H1 (cell line): ENCODE measurements at regions of chr6 and their contacts with region 1.

Region 1: GRCh38 chr6:30907758-30908591 is at the start of gene GTF2H4:
- DNase-seq: peak; percentile 93 to 95
- H3K4me3 ChIP-seq: peak within 1 kb of the TSS; percentile 83 to 98 (median 98)
- H3K27ac ChIP-seq: no peak within 1 kb of the TSS
- H3K4me1 ChIP-seq: peaks cover 0 to 4% (median 2%) of the 10 kb centered on the region in 4 experiments; a peak in 4 of 7 replicates
- H3K27me3 ChIP-seq: no peaks in the 10 kb centered on the region
- CTCF ChIP-seq: no peak
- EP300 ChIP-seq: no peak
- POLR2A ChIP-seq: peak in 1 of 2 experiments; percentile 63; a peak in 2 of 3 replicates
- RAD21 ChIP-seq: no peak
- total RNA-seq, gene GTF2H4: 49.5 and 53.4 TPM in 2 replicates

Region 2: GRCh38 chr6:30810813-30811329 is 97.1 kb before region 1 on chr6:
- CTCF ChIA-PET with region 1: no interaction called
- POLR2A ChIA-PET with region 1: no interaction called
- DNase-seq: no peak
- H3K4me3 ChIP-seq: no peak overlapping the region
- H3K27ac ChIP-seq: no peak overlapping the region
- H3K4me1 ChIP-seq: peaks cover 3 to 11% (median 6%) of the 10 kb centered on the region in 4 experiments; a peak in 6 of 7 replicates
- H3K27me3 ChIP-seq: no peaks in the 10 kb centered on the region
- CTCF ChIP-seq: no peak
- EP300 ChIP-seq: no peak
- POLR2A ChIP-seq: no peak
- RAD21 ChIP-seq: no peak

Region 3: DNA sequence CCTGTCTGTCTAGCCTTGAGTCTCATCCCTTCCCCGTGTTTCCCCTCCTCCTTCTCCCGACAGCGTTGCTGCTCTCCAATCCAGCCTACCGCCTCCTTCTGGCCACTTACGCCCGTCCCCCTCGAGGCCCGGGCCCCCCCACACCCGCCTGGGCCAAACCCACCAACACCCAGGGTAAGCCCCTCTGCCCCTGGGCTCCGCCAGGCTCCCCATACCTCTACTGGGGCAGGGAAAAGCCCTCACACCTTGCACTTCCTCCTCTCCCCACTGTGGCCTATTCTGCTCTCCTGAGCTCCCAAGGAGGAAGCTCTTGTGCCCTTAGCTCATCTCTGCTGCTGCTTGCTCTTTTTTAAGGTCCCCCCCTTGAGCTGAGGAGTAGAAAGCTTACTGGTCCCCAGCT is 12.6 kb before region 1 on chr6:
- CTCF ChIA-PET with region 1: interaction called, 12 read pairs
- POLR2A ChIA-PET with region 1: interaction called, 16 read pairs
- DNase-seq: no peak
- H3K4me3 ChIP-seq: no peak overlapping the region
- H3K27ac ChIP-seq: no peak overlapping the region
- H3K4me1 ChIP-seq: peaks cover 0 to 7% (median 1%) of the 10 kb centered on the region in 4 experiments; a peak in 3 of 7 replicates
- H3K27me3 ChIP-seq: no peaks in the 10 kb centered on the region
- CTCF ChIP-seq: no peak
- EP300 ChIP-seq: no peak
- POLR2A ChIP-seq: no peak
- RAD21 ChIP-seq: no peak